ENCODE measurements at regions of chr10 and their contacts with region 1.

Region 1: DNA sequence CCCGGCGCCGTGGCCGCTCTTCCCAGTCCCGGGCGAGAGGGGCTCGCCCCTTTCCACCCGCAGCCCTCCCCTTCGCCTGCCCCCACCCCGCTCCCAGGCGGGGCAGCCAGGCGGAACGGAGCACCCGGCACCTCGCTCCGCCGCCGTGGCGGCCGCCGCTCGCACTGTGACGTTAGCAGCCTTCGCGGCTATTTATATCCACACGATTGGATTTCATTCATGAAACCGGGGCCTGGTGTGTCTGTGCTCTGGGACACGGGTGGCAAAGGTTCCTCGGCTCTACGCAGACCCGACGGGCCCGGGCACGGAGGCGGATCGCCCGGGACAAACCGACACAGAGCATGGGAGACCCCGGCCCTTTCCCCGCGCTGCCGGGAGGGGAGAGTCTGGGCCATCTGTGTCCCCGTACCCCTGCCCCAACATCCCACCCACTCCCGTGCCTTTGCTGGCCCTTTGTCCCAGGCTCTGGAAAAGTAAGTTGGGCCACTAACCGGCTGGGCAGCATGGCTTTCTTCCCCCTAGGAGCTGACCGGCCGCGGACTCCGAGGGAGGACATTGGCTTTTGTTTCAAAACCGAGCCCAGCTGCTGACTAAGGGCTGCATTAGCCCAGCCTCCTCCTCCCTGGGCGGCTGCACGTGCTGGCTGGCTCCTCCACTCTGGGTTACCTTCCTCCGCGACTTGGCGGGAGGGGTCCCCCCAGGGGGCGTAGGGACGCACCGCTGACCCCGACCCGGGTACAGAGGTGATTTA is at the start of gene RHOBTB1:
- DNase-seq: peak; percentile 84
- ATAC-seq: peak; percentile 90 to 94
- total RNA-seq, gene RHOBTB1: 9.5 to 14.1 TPM

Region 2: GRCh38 chr10:60901561-60902235 is 42.6 kb before region 1 on chr10:
- intact Hi-C with region 1: loop called in 1 of 2 experiments (anchors 5 kb)
- DNase-seq: peak; percentile 76
- ATAC-seq: peak; percentile 86 to 88

Region 3: DNA sequence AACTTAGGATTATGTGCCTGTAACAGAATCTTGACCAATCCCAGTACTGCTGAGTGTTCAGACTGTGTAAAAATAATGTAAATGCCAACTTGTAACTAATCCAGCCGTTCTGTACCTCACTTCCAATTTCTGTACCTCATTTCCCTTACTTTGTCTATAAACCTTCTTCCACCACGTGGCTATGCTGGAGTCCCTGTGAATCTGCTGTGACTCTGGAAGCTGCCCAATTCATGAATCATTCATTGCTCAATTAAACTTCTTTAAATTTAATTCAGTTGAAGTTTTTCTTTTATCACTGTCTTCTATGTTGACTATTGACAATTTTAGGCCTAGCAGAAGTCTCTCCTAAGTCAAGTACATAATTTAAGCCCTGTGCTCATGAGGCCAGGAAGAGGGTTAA is 214.9 kb after region 1 on chr10:
- intact Hi-C with region 1: no loop called
- DNase-seq: no peak
- ATAC-seq: no peak